ENCODE measurements at regions of chr17 and their contacts with region 1.

Region 1: DNA sequence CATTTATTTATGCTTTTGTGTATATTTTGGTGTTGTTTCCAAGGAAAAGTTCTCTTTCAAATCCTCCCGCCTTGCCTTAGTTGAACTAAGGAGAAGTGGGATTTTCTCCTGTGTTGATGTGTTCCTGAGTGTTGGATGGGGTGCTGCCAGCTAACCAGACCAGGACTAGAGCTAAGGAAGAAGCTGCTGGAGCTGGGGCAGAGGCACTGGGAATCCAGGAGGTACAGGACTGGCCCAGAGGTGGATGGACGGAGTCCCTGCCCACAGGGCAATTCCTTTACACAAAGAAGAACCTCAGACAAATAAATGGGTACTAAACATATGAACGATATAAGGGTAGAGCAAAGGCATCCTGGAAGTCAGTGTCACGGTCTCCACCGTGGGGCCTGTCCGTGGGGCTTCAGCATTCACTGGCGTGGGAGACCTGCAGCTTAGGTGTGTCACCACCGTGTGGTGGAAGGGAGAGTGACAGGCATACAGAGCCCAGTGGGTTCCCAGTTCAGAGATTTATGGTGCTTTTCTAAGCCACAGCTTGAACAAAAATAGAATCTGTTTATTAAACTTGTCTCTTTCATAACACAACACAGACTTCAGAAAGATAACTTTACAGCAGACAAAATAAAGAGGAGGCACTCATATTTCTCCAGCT is 270.7 kb downstream of the NTN1 start:
- DNase-seq: peak; percentile 47 to 65
- ATAC-seq: peak; percentile 82

Region 2: GRCh38 chr17:8997994-8998628 is 293.9 kb before region 1 on chr17:
- intact Hi-C with region 1: loop called in 1 of 2 experiments (anchors 5 kb)
- DNase-seq: peak in 1 of 2 donors; percentile 70
- ATAC-seq: peak; percentile 71

Region 3: GRCh38 chr17:9522074-9522473 is 230.0 kb after region 1 on chr17:
- intact Hi-C with region 1: loop called in 1 of 2 experiments (anchors 5 kb)
- DNase-seq: no peak
- ATAC-seq: peak; percentile 75